RWPE1 (cell line): ENCODE measurements at regions of chr12 and their contacts with region 1.

Region 1: DNA sequence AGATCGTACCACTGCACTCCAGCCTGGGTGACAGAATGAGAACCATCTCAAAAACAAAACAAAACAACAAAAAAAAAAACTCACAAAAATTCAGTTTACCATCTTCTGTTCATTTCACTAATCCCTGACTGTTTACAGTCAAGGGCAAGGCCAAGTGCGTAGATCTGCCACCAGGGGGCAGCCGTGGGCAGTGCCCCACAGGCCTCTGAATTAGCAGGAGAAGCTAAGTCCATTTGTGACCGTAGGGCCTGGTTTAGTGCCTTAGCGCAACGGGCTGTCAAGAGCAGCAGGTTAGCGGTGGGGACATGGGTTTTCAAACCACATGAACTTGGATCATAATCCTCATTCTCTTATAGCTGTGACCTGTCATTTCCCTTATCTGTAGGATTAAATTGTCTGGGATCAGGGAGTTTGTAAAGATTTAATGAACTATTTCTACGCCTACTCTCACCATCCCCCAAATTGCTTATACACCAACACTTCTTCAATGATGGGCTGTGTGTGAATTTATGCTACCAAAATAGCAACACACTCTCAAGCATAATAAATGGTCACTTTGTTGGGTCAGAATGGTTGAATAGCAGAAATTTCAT is 49.0 kb downstream of the KCTD10 start:
- DNase-seq: peak; percentile 65
- H3K27ac ChIP-seq: no peak overlapping the region
- CTCF ChIP-seq: peak; percentile 93

Region 2: GRCh38 chr12:109378569-109378968 is 49.6 kb before region 1 on chr12:
- CTCF ChIA-PET with region 1: interaction called, 10 read pairs
- POLR2A ChIA-PET with region 1: no interaction called
- DNase-seq: no peak
- H3K27ac ChIP-seq: no peak overlapping the region
- CTCF ChIP-seq: no peak

Region 3: DNA sequence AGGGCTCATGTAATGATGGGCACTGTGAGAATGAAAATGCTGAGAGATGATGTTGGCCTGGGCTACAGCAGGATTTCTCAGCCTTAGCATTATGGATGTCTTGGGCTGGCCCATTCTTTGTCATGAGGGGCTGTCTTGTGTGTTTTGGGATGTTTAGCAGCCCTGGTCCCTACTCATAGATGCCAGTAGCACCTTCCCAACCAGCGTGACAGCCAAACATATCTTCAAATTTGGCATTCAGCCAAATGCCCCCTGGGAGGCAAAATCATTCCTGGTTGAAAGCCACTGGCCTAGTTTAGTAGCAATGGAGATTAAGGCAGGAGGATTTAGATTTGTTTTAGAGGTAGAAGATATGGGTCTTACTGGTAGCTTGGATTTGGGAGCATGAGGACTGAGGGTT is 75.9 kb after region 1 on chr12:
- CTCF ChIA-PET with region 1: no interaction called
- POLR2A ChIA-PET with region 1: no interaction called
- DNase-seq: no peak
- H3K27ac ChIP-seq: no peak overlapping the region
- CTCF ChIP-seq: no peak